AG04449 (cell line): ENCODE measurements at regions of chr4 and their contacts with region 1.

Region 1: DNA sequence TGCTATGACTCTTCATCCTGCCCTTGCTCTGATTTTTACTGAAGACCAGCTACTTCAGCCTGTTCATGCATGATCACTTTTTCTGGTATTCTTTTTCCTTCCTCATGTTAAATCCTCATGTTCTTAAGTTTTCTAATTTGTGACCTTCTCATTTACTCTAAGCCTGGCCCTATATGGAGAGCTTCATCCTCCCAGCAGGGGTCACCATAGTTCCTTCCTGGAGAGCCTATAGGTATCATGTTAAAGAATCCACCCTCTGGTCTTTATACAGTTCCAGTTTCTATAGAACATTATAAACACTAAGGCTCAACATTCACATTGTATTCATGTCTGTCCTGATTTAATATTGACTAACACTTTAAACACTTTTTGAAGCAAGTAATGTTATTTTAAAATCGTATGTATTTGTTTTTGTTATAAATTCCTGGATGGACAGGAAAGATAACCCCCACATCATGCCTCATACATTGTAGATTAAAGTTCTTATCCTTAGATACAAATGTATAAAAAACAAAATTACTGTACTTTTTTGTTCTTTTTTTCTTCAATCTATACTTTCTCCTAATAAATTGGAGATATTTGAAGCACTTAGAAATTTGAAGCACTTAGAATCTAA is 53.8 kb upstream of the OTUD4 start:
- DNase-seq: no peak
- H3K4me3 ChIP-seq: no peak overlapping the region
- CTCF ChIP-seq: peak; percentile 77

Region 2: DNA sequence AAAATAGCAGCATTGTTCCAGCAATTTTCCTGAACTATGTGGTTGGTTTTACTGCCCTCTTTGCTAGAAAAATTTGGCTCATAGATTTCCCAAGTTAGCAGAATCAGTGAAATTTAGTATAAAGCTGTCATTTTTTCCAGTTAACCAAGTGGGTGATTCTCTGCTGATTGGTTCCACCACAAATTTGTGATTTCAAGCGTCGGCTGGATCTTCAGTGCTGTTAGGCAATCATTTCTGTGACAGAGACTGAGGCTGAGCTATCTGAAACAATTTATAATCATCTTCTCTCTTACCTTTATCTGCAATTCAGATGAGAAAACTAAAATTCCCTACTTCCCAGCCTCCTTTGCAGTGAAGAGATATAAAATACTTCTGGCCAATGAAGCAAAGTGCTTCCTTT is 14.8 kb after region 1 on chr4:
- CTCF ChIA-PET with region 1: interaction called, 20 read pairs
- POLR2A ChIA-PET with region 1: no interaction called
- DNase-seq: no peak
- H3K4me3 ChIP-seq: no peak overlapping the region
- CTCF ChIP-seq: no peak

Region 3: GRCh38 chr4:145552181-145552822 is 318.1 kb after region 1 on chr4:
- CTCF ChIA-PET with region 1: interaction called, 35 read pairs
- POLR2A ChIA-PET with region 1: no interaction called
- DNase-seq: no peak
- H3K4me3 ChIP-seq: no peak overlapping the region
- CTCF ChIP-seq: no peak

Region 4: GRCh38 chr4:145566768-145567167 is 332.6 kb after region 1 on chr4:
- CTCF ChIA-PET with region 1: interaction called, 26 read pairs
- POLR2A ChIA-PET with region 1: no interaction called
- DNase-seq: no peak
- H3K4me3 ChIP-seq: no peak overlapping the region
- CTCF ChIP-seq: no peak

Region 5: DNA sequence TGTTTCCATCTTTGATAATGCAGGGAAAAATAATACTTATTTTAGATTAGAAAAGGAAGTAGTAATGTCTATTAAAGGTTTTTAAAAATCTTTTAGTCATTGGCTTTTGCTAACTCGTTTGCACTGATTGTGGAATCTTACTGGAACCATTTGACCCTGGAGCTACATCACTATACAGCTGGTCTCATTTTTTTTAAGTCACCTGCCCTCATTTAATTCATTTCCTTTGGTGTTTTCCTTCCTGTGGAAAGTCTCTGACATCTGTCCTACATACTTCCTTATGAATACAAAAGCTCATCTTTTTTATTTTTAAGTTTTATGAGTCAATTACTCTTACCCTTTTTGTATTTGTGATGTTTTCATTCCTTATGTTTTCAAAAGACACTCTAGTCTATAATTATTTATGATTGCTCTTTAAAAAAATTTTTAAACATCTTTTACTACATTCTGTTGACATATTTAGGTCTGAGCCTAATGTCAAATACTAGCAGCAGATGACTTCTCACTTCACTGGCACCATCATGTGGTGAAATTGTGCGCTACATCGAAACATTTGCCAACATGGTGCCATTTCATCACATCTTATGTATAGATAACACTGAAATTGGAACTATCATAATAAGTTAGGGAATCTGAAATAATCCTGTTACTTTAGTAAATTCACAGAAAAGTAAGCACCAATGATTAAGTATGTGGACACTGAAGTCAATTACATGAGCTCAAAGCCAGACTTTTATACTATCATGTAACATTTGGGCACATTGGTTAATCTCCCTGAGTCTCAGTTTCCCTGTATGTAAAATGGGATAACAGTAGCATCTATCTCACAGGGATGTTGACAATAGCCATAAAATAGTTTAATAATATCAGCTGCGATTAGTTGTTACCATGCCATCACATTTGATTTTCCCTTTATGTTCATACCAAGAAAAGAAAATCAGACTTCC is 375.6 kb after region 1 on chr4:
- CTCF ChIA-PET with region 1: interaction called, 42 read pairs
- POLR2A ChIA-PET with region 1: no interaction called
- DNase-seq: no peak
- H3K4me3 ChIP-seq: no peak overlapping the region
- CTCF ChIP-seq: peak; percentile 70